ENCODE measurements at regions of chr2 and their contacts with region 1.

Region 1: GRCh38 chr2:95314964-95315611 is 17.9 kb downstream of the KCNIP3 start:
- DNase-seq: no peak
- H3K4me3 ChIP-seq: no peak overlapping the region
- H3K27me3 ChIP-seq: no peaks in the 10 kb centered on the region; the same call in 1 of the 2 replicates
- CTCF ChIP-seq: peak; percentile 76

Region 2: GRCh38 chr2:94970353-94970752 is 344.7 kb before region 1 on chr2:
- CTCF ChIA-PET with region 1: no interaction called
- POLR2A ChIA-PET with region 1: no interaction called
- DNase-seq: no peak
- H3K4me3 ChIP-seq: no peak overlapping the region
- H3K27me3 ChIP-seq: no peaks in the 10 kb centered on the region; the same call in 1 of the 2 replicates
- CTCF ChIP-seq: no peak

Region 3: DNA sequence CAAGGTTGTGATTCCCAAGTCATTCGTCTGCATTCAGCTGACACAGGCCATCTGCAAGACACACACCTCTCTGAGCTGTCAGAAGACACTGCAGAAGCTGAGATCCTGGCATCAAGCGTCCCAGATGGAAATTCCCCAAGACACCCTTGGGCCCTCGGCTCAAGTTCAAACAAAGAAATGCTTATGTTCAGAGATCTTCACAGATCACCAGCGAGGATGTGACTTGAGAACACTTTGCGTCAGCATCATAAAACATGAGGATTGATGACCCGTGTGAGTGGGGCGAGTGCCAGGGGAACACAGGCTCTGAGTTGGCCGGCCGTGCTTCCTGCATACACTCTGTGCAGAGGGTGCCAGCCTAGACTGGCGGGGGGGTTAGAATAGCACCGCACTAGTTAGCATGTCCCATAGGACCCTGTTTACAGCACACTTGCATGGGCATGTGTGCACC is 18.8 kb after region 1 on chr2:
- CTCF ChIA-PET with region 1: interaction called, 29 read pairs
- POLR2A ChIA-PET with region 1: no interaction called
- DNase-seq: peak; percentile 97
- H3K4me3 ChIP-seq: no peak overlapping the region
- H3K27me3 ChIP-seq: no peaks in the 10 kb centered on the region
- CTCF ChIP-seq: no peak

Measured in BJ (cell line).